Activated CD4-positive, alpha-beta T cell treated with anti-CD3 and anti-CD28 coated beads, Interleukin-2, amount 10 ng/mL, durations not matched to agents 24 days and 14 days (primary cell): ENCODE measurements at regions of chr10 and their contacts with region 1.

Region 1: GRCh38 chr10:1022413-1022812 is 3.2 kb downstream of the IDI2 start:
- DNase-seq: no peak
- H3K4me3 Mint-ChIP-seq: no peak overlapping the region
- H3K27ac Mint-ChIP-seq: no peak overlapping the region
- H3K4me1 Mint-ChIP-seq: no peaks in the 10 kb centered on the region
- H3K27me3 Mint-ChIP-seq: no peaks in the 10 kb centered on the region

Region 2: DNA sequence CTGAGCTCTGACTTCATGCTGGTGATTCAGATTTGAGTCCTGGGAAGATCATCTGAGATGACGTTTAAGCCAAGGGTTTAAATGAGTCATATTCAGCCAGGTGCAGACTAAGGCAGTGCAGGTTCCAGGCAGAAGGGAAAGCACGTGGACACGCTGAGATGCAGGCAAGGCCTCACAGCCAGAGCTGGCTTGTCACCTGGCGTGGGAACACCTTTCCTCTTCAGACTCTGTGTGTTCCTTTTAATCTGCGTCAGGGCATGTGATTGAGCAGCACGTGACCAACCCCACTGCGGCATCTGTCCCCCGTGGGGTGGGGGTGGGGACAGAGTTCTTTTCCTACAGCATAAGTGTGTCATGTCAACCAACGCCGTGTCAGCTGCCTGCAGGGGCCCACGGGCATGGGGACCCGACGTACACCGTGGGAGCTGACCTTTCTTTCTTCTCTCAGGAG is 14.0 kb after region 1 on chr10:
- intact Hi-C with region 1: loop called (anchors 2 kb)
- DNase-seq: no peak
- H3K4me3 Mint-ChIP-seq: no peak overlapping the region
- H3K27ac Mint-ChIP-seq: peak overlapping the region; percentile 38
- H3K4me1 Mint-ChIP-seq: peaks cover 14% of the 10 kb centered on the region
- H3K27me3 Mint-ChIP-seq: no peaks in the 10 kb centered on the region

Region 3: DNA sequence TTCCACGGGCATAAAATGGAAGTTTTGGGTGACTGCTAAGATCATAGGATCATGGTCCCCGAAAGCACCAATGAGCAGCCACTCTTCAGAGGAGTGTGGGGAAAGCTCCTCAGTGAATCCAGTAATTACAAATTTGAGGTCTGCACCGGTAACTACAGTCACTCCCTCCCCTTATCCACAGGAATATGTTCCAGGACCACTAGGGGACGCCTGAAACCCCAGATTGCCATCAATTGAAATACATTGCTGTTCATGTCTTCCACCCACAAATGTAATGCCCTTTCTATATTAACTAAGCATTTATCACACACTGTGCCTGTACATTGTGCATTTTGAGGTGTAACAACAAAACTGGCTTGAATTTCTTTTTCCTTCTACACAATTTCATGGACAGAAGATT is 1597.1 kb after region 1 on chr10:
- intact Hi-C with region 1: no loop called
- DNase-seq: no peak
- H3K4me3 Mint-ChIP-seq: no peak overlapping the region
- H3K27ac Mint-ChIP-seq: no peak overlapping the region
- H3K4me1 Mint-ChIP-seq: no peaks in the 10 kb centered on the region
- H3K27me3 Mint-ChIP-seq: no peaks in the 10 kb centered on the region